ENCODE measurements at regions of chr12 and their contacts with region 1.

Region 1: GRCh38 chr12:26803552-26803951 is 29.4 kb downstream of the ITPR2 start:
- DNase-seq: peak; percentile 25 to 65
- H3K4me3 ChIP-seq: no peak overlapping the region
- H3K27ac ChIP-seq: no peak overlapping the region
- H3K4me1 ChIP-seq: peaks cover 6% of the 10 kb centered on the region
- H3K27me3 ChIP-seq: no peaks in the 10 kb centered on the region
- CTCF ChIP-seq: no peak

Region 2: DNA sequence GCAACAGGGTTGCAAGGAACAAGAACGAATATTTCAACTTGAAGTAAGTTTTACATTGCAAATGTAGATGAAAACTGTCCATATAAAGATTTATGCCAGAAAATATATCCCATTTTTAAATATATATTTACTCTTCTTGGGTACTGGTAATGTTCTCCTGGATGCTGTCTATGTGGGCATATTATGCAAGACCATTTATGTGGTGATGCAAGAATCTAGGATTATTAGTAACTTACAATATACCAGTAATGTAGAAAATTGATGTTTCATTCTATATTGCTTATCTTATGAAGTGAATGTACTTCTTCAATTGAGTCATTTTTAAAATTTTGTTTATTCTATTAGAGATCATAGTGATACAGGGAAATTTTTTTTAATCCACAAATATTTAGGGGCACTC is 159.9 kb after region 1 on chr12:
- CTCF ChIA-PET with region 1: no interaction called
- POLR2A ChIA-PET with region 1: interaction called, 10 read pairs
- intact Hi-C with region 1: no loop called
- DNase-seq: no peak
- H3K4me3 ChIP-seq: no peak overlapping the region
- H3K27ac ChIP-seq: no peak overlapping the region
- H3K4me1 ChIP-seq: no peaks in the 10 kb centered on the region
- H3K27me3 ChIP-seq: no peaks in the 10 kb centered on the region
- CTCF ChIP-seq: no peak

Region 3: GRCh38 chr12:27109334-27110028 is 305.9 kb after region 1 on chr12:
- CTCF ChIA-PET with region 1: no interaction called
- POLR2A ChIA-PET with region 1: no interaction called
- intact Hi-C with region 1: no loop called
- DNase-seq: peak in 1 of 2 experiments; percentile 5
- H3K4me3 ChIP-seq: no peak overlapping the region
- H3K27ac ChIP-seq: no peak overlapping the region
- H3K4me1 ChIP-seq: peaks cover 20% of the 10 kb centered on the region; the same call in 1 of the 2 replicates
- H3K27me3 ChIP-seq: no peaks in the 10 kb centered on the region
- CTCF ChIP-seq: no peak

Region 4: DNA sequence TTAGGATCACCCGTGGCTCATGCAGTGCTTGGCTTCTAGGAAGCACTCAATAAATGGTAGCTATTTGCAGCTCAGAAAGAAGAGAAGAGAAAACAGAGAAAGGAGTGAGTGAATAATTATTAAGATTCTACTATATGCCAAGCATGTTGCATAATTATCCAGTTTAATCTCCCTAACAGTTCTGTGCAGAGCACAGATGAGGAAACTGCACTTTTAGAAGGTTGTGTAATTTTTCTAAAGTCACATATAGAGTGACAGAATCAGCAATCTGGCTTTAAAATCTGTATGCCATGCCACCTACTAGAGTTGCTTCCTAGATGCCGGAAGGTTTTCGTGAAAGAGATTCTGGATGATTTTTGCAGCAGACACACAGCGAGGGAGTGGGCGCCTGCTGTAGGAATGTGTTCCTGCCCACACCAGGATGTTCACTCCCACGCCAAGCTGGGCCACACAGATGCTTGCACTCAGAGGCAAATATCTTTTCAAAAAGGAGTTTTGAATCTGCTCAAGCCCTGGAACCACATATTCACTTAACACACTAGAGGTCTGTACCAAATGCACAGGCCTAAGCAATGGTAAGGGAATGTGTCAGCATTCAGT is 592.8 kb after region 1 on chr12:
- CTCF ChIA-PET with region 1: no interaction called
- POLR2A ChIA-PET with region 1: no interaction called
- intact Hi-C with region 1: no loop called
- DNase-seq: no peak
- H3K4me3 ChIP-seq: no peak overlapping the region
- H3K27ac ChIP-seq: no peak overlapping the region
- H3K4me1 ChIP-seq: no peaks in the 10 kb centered on the region
- H3K27me3 ChIP-seq: no peaks in the 10 kb centered on the region
- CTCF ChIP-seq: no peak

Measured in PC-9 (cell line).